GM23248 (cell line): ENCODE measurements at regions of chr9 and their contacts with region 1.

Region 1: GRCh38 chr9:114681594-114682332 is at the start of gene TEX48:
- DNase-seq: peak; percentile 87
- H3K4me3 ChIP-seq: no peak within 1 kb of the TSS
- H3K27ac ChIP-seq: no peak within 1 kb of the TSS
- H3K4me1 ChIP-seq: peaks cover 31% of the 10 kb centered on the region
- H3K27me3 ChIP-seq: no peaks in the 10 kb centered on the region
- total RNA-seq, gene TEX48: not detected in 2 replicates

Region 2: DNA sequence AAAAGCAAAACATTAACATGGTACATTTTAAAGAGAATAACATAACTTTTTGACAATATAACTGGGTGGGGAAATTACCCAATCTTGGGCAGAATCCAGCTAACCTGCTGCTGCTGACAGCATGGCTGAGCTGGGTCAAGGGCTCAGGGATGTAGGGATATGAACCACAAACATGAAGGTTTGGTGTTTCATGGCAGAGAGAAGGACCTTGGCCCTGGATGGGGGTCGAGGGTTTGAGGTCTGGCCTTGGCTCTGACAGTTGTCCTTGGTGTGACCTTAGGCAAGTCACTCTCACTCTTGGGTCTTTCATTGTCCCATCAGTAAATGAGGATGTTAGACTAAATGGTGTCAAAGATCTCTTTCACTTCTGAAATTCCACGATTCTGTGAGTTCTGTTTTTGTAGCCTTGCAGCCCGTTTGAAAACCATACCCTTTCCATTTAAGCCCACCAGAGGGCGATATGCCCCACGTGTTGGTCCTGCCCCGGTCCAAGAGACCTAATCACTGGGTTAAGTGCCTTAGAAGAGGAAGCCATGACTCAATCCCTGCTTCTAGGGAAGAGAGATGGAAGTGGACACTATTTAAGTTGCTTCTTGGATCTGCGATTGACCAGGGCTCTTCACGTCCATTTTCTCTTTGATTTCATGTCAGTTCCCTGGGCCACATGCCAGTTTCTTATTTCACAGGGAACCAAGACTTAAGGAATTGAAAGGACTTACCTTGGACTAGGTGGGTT is 57.0 kb after region 1 on chr9:
- in situ Hi-C with region 1: loop called (anchors 10 kb)
- DNase-seq: peak; percentile 95
- H3K4me3 ChIP-seq: no peak overlapping the region
- H3K27ac ChIP-seq: no peak overlapping the region
- H3K4me1 ChIP-seq: peaks cover 17% of the 10 kb centered on the region
- H3K27me3 ChIP-seq: no peaks in the 10 kb centered on the region

Region 3: GRCh38 chr9:114906908-114907571 is 225.3 kb after region 1 on chr9:
- in situ Hi-C with region 1: loop called (anchors 5 kb)
- DNase-seq: peak; percentile 72
- H3K4me3 ChIP-seq: no peak overlapping the region
- H3K27ac ChIP-seq: no peak overlapping the region
- H3K4me1 ChIP-seq: peaks cover 36% of the 10 kb centered on the region
- H3K27me3 ChIP-seq: no peaks in the 10 kb centered on the region

Region 4: DNA sequence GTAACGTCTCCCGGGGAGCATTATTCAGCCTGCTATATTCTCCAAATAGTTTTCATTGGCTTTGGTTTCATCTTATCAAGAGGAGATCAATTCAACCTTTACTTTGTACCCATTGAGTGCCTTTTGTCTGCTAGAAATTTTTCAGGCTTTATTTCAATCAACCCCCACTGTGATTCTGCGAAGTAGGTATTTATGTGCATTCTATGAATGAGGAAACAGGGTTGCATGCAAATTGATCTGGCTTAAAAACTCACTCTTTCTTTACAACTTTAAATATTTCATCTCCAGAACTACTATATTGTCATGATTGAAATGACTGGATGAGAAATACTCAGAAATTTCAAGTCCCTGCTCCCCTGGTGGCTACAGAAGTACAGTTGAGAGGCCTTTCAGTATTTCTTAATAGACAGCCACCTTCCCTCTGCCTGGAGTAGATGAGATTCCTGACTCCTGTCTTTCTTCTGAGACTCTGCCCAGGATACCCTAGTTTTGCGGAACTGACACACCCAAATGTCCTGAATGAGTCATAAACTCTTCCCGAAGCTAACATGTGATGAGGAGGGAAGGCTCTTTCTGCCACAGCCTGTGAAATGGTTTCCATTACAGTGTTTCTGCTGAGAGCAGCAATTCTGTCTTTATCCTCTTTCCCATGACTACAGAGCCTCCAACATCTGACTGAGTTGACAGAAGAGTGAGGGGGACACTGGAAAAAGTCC is 488.8 kb after region 1 on chr9:
- in situ Hi-C with region 1: no loop called
- DNase-seq: peak; percentile 74
- H3K4me3 ChIP-seq: no peak overlapping the region
- H3K27ac ChIP-seq: no peak overlapping the region
- H3K4me1 ChIP-seq: peaks cover 23% of the 10 kb centered on the region
- H3K27me3 ChIP-seq: no peaks in the 10 kb centered on the region